ENCODE measurements at regions of chr6 and their contacts with region 1.

Region 1: DNA sequence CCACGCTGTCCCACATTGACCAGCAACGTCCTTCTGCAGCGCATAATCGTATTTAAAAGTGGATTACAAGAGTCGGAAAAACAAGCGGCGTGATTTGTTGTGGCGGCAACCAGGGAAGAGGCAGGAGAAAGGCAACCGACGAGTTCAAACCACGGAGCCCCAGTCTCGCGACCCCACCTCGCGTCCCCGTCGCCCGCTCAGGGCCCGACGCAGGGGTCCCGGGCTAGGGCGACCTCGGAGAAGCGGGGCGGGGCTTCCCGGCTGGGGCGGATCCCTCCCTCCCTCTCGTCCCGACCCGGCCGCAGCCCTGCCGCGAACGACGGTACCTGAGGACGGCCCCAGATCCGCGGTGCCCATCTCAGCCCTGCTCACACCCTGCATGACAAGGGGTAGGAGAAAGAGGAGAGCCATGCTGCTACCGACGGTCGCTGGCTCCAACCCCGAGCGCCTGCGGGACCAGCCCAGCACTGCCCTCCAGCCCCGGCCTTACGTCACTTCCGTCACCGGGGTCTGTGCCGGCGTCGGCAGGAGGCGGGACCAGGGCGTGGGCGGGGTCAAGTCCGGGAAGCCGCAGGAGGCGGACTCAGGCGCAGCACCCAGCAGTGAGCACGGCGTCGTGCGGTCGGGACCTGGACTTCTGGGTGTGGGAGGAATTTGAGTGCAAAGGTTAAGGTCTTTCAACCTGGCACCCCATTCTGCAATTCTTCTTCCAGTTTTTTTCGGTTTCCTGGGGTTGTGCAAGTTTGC is at the start of gene IFNGR1:
- DNase-seq: peak; percentile 99 to 100
- ATAC-seq: peak; percentile 98
- H3K4me3 ChIP-seq: peak within 1 kb of the TSS; percentile 84 to 92
- H3K27ac ChIP-seq: peak within 1 kb of the TSS; percentile 73 to 93
- H3K4me1 ChIP-seq: peaks cover 3 to 23% of the 10 kb centered on the region in 2 donors
- H3K27me3 ChIP-seq: no peaks in the 10 kb centered on the region
- total RNA-seq, gene IFNGR1: 64.4 to 82.8 TPM

Region 2: DNA sequence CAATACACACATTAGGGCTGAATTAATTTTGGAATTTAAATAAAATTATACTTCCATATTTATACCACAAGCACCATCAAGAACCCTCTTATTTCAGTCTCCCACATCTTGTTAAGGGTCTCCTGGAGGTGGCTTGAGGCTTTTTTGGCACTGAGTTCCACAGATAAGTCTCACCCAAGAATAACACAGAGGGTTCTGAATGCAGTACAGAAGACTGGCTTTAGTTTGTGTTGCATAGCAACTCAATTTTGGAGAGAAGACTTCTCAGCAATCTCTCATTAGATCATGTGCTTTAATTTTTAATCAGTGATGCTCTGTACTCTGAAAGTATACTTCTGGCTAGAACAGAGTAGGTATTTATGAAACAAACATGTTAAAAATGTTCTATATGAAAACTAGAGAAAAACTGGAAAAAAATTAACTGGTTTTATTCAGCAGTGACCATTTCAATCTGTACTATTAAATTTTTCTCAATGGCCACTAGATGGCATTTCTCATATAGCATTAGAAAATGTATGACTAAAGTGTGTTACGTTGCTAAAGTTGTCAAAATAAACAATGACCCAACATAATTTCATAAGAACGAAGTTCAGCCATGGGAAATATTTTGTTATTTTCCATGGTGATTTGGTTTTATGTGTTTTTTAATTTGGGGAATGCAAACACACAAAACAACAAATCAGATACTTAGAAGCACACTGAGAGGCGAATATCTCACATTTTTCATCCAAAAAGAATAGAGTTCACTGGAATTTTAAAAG is 636.2 kb before region 1 on chr6:
- intact Hi-C with region 1: loop called in 1 of 2 experiments (anchors 10 kb)
- DNase-seq: no peak
- ATAC-seq: peak; percentile 80
- H3K4me3 ChIP-seq: no peak overlapping the region
- H3K27ac ChIP-seq: peak overlapping the region; percentile 63 to 78
- H3K4me1 ChIP-seq: peaks cover 2 to 8% of the 10 kb centered on the region in 2 donors
- H3K27me3 ChIP-seq: no peaks in the 10 kb centered on the region

Region 3: DNA sequence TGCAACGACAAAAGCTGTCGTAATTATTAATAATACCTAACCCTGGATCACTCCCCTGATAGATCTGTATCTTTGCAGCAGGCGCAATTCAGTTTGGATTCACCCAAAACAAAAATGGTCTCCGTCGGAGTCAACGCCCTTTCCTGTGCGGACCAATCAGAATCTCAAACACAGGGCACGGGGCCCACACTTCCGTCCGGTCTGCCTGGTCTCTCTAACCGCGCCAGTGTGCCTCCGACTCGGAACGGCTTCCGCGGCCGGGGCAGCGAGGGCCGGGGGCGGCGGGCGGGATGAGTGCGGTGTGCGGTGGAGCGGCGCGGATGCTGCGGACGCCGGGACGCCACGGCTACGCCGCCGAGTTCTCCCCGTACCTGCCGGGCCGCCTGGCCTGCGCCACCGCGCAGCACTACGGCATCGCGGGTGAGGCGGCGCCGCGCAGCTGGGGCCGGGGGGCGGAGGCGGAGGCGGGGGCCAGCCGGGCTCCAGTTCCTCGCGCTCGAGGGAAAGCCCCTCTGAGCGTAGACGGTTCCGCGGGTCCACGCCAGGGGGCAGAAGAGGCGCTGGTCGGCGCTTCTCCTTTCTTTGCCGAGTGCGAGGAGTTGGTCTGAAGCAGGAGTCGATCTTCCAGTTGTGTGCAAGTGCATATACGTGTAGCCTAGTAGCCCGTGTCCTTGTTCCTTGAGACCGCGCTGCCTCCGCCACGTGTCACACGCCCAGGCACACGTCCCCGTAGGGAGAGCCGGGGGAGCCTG is 396.5 kb before region 1 on chr6 and contains the start of gene PEX7:
- intact Hi-C with region 1: loop called in 1 of 2 experiments (anchors 10 kb)
- DNase-seq: peak; percentile 94 to 95
- ATAC-seq: peak; percentile 96
- H3K4me3 ChIP-seq: peak within 1 kb of the TSS; percentile 43 to 89
- H3K27ac ChIP-seq: peak within 1 kb of the TSS in 1 of 2 donors; percentile 91
- H3K4me1 ChIP-seq: no peaks in the 10 kb centered on the region
- H3K27me3 ChIP-seq: no peaks in the 10 kb centered on the region
- total RNA-seq, gene PEX7: 4.2 to 5.5 TPM

Region 4: DNA sequence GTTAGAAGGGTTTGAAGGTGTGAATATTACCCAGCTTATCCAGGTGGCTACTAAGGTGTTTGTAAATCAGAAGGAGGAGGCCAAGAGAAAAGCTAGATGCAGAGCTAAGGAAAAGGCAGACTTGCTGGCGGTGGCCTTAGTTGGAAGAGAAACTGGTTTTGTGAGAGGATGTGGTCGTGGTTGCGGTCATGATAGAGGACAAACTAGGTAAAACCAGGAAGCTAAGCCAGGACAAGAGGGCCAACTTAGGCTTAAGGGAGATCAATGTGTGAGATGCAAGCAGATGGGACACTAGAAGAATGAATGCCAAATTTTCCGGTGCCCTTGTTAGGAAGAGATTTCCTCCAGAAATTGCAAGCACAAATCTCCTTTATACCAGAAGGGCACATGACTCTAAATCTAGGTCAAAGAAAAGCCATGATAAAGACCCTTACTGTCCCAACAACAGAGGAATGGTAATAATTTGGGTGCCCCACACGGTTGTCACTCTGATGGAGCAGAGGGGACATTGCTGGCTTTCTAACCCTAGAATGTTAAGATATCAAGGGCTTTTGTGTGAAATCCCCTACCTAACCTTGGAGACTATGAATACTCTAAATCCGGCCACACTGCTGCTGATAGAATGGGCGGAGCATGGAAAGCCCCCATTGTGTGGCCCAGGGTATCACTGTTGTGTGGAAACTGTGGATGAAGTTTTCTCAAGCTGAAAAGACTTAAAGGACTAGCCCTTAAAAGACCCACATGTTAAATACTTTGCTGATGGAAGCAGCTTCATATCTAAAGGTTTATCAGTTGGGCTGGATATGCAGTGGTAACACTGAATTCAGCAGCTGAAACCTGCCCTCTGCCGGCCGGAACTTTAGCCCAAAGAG is 53.5 kb before region 1 on chr6:
- intact Hi-C with region 1: no loop called
- DNase-seq: no peak
- ATAC-seq: no peak
- H3K4me3 ChIP-seq: no peak overlapping the region
- H3K27ac ChIP-seq: no peak overlapping the region
- H3K4me1 ChIP-seq: no peaks in the 10 kb centered on the region
- H3K27me3 ChIP-seq: no peaks in the 10 kb centered on the region

Region 5: DNA sequence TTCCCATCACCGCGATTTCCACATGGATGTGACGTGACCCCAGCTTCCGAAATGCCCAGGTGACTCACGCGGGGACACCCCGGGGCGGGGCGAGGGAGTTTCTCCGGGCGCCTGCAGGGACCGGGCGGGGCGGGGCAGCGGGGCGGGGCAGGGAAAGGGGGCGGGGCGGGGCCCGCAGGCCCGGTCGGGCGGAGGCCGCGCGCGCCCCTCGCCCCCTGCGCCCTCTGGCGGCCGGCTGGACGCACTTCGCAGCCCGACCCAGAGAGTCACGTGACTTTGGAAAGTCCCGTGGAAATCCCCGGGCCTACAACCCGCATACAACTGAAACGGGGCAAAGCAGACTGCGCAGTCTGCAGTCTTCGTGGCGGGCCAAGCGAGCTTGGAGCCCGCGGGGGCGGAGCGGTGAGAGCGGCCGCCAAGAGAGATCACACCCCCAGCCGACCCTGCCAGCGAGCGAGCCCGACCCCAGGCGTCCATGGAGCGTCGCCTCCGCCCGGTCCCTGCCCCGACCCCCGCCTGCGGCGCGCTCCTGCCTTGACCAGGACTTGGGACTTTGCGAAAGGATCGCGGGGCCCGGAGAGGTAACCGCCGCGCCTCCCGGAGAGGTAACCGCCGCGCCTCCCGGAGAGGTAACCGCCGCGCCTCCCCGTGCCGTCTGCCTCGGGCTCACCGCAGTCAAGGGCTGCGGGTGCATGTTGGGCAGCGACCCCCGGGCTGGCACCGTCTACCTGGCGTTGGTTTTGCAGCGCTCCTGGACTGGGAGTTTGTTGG is 648.0 kb after region 1 on chr6 and contains the start of gene TNFAIP3:
- intact Hi-C with region 1: loop called in 1 of 2 experiments (anchors 10 kb)
- DNase-seq: peak; percentile 95 to 98
- ATAC-seq: peak; percentile 94
- H3K4me3 ChIP-seq: peak within 1 kb of the TSS; percentile 75 to 78
- H3K27ac ChIP-seq: peak within 1 kb of the TSS; percentile 40 to 77
- H3K4me1 ChIP-seq: no peaks in the 10 kb centered on the region
- H3K27me3 ChIP-seq: no peaks in the 10 kb centered on the region
- total RNA-seq, gene TNFAIP3: 22.0 to 40.2 TPM